Right lobe of liver (tissue), 6 donors: ENCODE measurements at regions of chr6 and their contacts with region 1.

Region 1: DNA sequence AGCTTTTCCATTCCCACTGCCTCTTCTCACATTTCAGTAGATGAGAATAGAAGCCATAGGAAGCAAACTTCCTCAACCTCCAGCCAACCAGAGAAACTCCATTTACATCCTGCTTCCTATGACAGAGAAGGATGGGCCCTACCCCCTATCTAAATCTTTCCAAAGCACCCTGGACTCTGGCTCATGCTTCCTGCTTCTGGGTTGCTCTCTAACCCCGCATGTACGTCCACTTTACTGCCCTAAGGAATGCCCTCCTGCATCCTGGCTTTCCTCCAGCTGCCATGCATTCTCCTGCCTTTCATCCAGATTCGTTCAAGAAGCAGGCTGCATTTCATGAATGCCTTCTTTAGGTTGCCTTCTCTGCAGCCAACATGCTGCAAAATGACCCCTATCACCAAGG is 91.9 kb downstream of the FAM217A start:
- DNase-seq: no peak
- ATAC-seq: peak in 3 of 4 donors; percentile 23 to 39 (median 31)
- H3K4me3 ChIP-seq: no peak overlapping the region
- H3K27ac ChIP-seq: no peak overlapping the region
- H3K4me1 ChIP-seq: peaks cover 0 to 10% (median 0%) of the 10 kb centered on the region in 4 donors
- H3K27me3 ChIP-seq: no peaks in the 10 kb centered on the region
- CTCF ChIP-seq: no peak
- POLR2A ChIP-seq: no peak

Region 2: DNA sequence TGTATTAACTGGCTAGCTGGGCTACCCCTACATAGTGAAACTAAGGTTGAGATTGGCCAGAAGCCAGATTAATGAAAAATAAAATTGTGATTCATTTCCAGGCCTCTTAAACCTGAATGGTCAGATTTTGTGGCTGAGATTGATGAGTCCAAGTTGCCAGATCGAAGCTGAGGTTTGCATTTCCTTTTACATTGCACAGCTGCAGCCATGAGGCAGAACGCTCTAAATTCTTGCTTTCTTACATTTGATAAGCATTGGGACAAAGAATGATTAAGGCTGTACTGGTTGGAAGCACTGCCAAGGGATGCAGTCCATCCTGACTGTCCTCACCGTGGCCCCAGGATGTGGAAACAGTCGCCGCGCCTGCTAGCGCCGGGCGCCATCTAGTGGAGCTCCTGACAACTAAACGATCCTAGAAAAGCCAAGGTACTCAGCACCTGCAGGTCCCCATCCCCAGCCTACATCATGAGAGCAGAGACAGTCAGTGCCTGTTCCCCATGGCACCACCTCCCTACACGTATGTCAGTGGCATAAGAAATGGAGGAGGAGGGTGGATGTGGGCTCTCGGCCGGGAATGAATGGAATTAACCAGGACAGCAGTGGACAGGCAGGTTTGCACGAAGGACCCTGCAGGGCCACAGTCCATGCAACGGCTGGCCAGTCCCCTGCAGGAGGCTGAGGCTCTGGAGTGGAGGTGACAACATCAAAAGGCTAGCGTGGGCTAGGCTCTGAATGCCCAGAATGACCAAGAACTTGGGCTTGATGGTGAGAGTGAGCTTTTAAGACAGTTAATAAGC is 254.5 kb before region 1 on chr6:
- intact Hi-C with region 1: loop called in 1 of 2 experiments (anchors 10 kb)
- DNase-seq: peak; percentile 80 to 81 (median 81)
- ATAC-seq: peak; percentile 87 to 91 (median 90)
- H3K4me3 ChIP-seq: no peak overlapping the region
- H3K27ac ChIP-seq: no peak overlapping the region
- H3K4me1 ChIP-seq: peaks cover 0 to 13% (median 0%) of the 10 kb centered on the region in 4 donors
- H3K27me3 ChIP-seq: no peaks in the 10 kb centered on the region
- CTCF ChIP-seq: peak; percentile 76 to 94 (median 87)
- POLR2A ChIP-seq: no peak

Region 3: DNA sequence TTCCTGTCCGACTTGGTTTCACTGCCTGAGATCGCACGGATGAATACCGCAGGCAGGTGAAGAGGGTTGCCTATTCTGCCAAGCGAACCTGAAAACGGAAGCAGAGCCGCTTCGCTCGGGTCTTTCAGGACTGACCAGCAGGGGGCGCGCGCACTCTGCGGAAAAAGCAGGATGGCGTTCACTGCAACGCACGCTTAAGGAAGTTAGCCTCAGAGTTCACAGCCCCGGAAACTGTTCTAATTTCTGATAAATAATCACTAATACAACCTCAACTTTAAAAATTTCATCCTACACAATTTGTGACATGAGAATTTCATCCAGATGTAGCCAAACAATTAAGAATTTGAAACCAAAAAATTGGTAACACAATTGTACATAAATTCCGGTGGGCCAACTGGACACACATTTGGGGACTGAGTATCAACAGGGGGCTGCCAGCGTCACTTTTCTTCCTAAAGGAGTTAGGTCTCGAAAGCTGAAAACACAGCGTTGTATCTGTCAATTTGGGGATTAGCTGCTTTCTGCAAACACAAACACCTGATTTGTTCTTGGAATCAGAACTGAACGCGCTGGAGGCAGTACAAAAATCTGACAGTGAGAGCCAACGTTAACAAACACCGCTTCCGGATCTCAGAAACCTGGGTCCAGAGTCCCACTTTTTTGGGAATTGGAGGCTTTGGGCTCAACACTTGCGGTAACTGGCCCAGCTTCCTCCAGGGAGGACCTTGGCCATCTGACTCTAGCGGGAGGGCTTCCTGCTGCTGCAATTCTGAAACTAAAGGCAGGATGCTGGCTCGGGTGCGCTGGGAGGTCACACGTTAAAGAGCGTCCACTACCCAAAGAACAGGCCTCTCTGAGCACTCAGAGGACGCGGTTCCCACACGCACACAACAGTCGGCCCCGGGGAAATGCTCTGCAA is 244.4 kb before region 1 on chr6:
- intact Hi-C with region 1: loop called (anchors 10 kb)
- DNase-seq: peak; percentile 87 to 92 (median 91)
- ATAC-seq: peak; percentile 75 to 82 (median 79)
- H3K4me3 ChIP-seq: peak overlapping the region in 2 of 3 donors; percentile 35 to 36
- H3K27ac ChIP-seq: peak overlapping the region; percentile 66 to 92 (median 76)
- H3K4me1 ChIP-seq: peaks cover 0 to 75% (median 36%) of the 10 kb centered on the region in 4 donors
- H3K27me3 ChIP-seq: no peaks in the 10 kb centered on the region
- CTCF ChIP-seq: peak; percentile 96 to 98 (median 96)
- POLR2A ChIP-seq: peak; percentile 89

Region 4: GRCh38 chr6:3813150-3813780 is 173.8 kb before region 1 on chr6:
- intact Hi-C with region 1: no loop called
- DNase-seq: peak in 1 of 3 donors; percentile 64
- ATAC-seq: peak; percentile 73 to 89 (median 85)
- H3K4me3 ChIP-seq: no peak overlapping the region
- H3K27ac ChIP-seq: no peak overlapping the region
- H3K4me1 ChIP-seq: no peaks in the 10 kb centered on the region
- H3K27me3 ChIP-seq: no peaks in the 10 kb centered on the region
- CTCF ChIP-seq: no peak
- POLR2A ChIP-seq: no peak

Region 5: DNA sequence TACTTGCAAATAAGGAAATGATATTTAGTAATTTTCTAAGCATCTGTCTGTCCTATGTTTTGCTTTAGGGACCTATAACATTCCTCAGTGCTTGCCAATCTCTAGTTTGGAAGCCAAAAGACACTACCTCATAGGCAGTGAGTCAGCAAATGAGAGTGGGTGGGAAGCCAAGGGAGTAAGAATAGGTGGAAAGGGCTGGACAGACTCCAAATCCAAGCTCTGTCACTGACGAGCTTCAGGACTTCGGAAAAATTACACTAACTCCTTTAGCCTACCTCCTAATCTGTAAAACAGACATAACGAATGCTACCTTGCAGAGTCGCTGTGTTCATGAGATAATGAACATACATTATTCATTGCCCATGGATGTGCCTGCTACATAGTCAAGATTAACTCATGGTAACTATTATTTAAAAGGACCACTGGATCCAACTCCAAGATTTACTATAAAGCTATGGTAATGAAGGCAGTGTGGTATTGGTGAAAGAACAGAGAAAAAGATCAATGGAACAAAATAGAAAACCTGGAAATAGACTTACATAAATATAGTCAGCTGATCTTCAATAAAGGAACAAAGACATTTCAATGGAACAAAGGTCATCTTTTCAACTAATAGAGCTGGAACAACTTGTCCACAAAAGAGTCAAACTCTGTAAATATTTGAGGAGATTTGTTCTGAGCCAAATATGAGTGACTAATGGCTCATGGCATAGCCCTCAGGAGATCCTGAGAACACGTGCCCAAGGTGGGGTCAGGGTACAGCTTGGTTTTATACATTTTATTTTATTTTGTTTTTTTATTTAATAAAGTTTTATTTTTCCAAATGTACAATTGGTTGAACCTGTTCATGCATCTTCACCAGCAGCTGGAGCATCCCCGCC is 73.7 kb before region 1 on chr6:
- intact Hi-C with region 1: no loop called
- DNase-seq: peak in 2 of 3 donors; percentile 37 to 77
- ATAC-seq: peak; percentile 83 to 90 (median 86)
- H3K4me3 ChIP-seq: no peak overlapping the region
- H3K27ac ChIP-seq: peak overlapping the region; percentile 75 to 94 (median 88)
- H3K4me1 ChIP-seq: peaks cover 0 to 43% (median 18%) of the 10 kb centered on the region in 4 donors
- H3K27me3 ChIP-seq: no peaks in the 10 kb centered on the region
- CTCF ChIP-seq: no peak
- POLR2A ChIP-seq: no peak

Region 6: DNA sequence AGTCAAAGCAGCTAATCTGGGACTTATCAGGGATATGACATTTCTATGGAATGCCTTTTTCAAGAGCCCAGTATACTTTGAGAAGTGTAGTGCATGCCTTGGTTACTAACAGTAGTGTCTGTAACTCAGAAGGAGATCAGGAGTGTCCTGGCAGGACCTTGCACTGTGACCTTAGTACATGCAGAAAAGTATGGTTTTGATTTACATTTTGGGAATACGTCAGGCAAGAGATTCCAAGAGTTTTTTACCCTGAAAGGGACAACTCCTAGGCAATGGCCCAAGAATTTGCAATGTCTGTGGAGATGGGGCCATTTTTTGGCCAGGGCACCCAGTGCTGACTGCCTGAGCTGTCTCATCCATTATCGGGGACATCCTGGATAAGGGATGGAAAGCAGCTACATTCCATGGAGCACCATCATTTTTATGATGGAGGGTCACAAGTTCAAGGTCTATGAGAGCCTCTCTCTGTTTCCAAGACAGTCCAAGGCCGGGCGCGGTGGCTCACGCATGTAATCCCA is 57.7 kb before region 1 on chr6:
- intact Hi-C with region 1: loop called in 1 of 2 experiments (anchors 10 kb)
- DNase-seq: no peak
- ATAC-seq: no peak
- H3K4me3 ChIP-seq: no peak overlapping the region
- H3K27ac ChIP-seq: no peak overlapping the region
- H3K4me1 ChIP-seq: no peaks in the 10 kb centered on the region
- H3K27me3 ChIP-seq: no peaks in the 10 kb centered on the region
- CTCF ChIP-seq: no peak
- POLR2A ChIP-seq: no peak